Ascending aorta (tissue), 2 donors: ENCODE measurements at regions of chr1 and their contacts with region 1.

Region 1: GRCh38 chr1:61453111-61453961 is 271.6 kb downstream of the TM2D1 start:
- DNase-seq: peak; percentile 76 to 97
- H3K4me3 ChIP-seq: peak overlapping the region in 1 of 2 donors; percentile 31
- H3K27ac ChIP-seq: peak overlapping the region; percentile 83 to 92
- H3K4me1 ChIP-seq: peaks cover 20 to 54% of the 10 kb centered on the region in 2 donors
- H3K27me3 ChIP-seq: no peaks in the 10 kb centered on the region
- CTCF ChIP-seq: peak; percentile 67 to 80 (median 68)

Region 2: GRCh38 chr1:60978421-60979357 is 474.6 kb before region 1 on chr1:
- intact Hi-C with region 1: loop called (anchors 5 kb)
- DNase-seq: no peak
- H3K4me3 ChIP-seq: no peak overlapping the region
- H3K27ac ChIP-seq: peak overlapping the region; percentile 45 to 78
- H3K4me1 ChIP-seq: peaks cover 0 to 27% of the 10 kb centered on the region in 2 donors
- H3K27me3 ChIP-seq: no peaks in the 10 kb centered on the region
- CTCF ChIP-seq: peak; percentile 29 to 53 (median 46)

Region 3: GRCh38 chr1:61077676-61078541 is 375.4 kb before region 1 on chr1:
- intact Hi-C with region 1: loop called (anchors 2 kb)
- DNase-seq: peak; percentile 86 to 96
- H3K4me3 ChIP-seq: peak overlapping the region; percentile 75 to 95
- H3K27ac ChIP-seq: peak overlapping the region; percentile 82 to 95
- H3K4me1 ChIP-seq: peaks cover 8 to 35% of the 10 kb centered on the region in 2 donors
- H3K27me3 ChIP-seq: no peaks in the 10 kb centered on the region
- CTCF ChIP-seq: no peak

Region 4: GRCh38 chr1:61190618-61191432 is 262.5 kb before region 1 on chr1:
- intact Hi-C with region 1: loop called (anchors 5 kb)
- DNase-seq: no peak
- H3K4me3 ChIP-seq: peak overlapping the region in 1 of 2 donors; percentile 14
- H3K27ac ChIP-seq: peak overlapping the region; percentile 84 to 92
- H3K4me1 ChIP-seq: peaks cover 5 to 47% of the 10 kb centered on the region in 2 donors
- H3K27me3 ChIP-seq: no peaks in the 10 kb centered on the region
- CTCF ChIP-seq: no peak

Region 5: GRCh38 chr1:61337981-61338848 is 115.1 kb before region 1 on chr1:
- intact Hi-C with region 1: loop called (anchors 2 kb)
- DNase-seq: peak; percentile 38 to 92
- H3K4me3 ChIP-seq: peak overlapping the region; percentile 27 to 54
- H3K27ac ChIP-seq: peak overlapping the region; percentile 86 to 88
- H3K4me1 ChIP-seq: peaks cover 3 to 45% of the 10 kb centered on the region in 2 donors
- H3K27me3 ChIP-seq: no peaks in the 10 kb centered on the region
- CTCF ChIP-seq: peak; percentile 71 to 80 (median 75)

Region 6: GRCh38 chr1:61496476-61496893 is 43.1 kb after region 1 on chr1:
- intact Hi-C with region 1: no loop called
- DNase-seq: no peak
- H3K4me3 ChIP-seq: no peak overlapping the region
- H3K27ac ChIP-seq: peak overlapping the region in 1 of 2 donors; percentile 18
- H3K4me1 ChIP-seq: no peaks in the 10 kb centered on the region
- H3K27me3 ChIP-seq: no peaks in the 10 kb centered on the region
- CTCF ChIP-seq: no peak

Region 7: DNA sequence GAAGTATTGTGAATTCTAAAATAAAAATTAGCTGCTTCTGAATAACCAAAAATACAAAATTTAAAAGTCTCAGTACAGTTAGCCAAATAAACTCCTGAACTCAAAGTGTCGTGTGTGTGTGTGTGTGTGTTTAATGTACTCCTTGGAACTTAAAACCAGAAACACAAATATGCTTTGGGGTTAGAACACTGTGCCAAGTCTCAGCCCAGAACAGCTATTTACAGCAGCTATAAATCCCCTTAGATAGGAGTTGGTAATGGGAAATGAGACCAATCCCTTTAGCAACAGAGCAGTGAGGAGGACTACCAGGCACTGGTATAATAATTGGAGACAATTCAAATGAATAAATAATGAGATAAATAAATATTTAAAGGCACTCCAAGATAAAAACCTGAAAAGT is 372.1 kb after region 1 on chr1:
- intact Hi-C with region 1: no loop called
- DNase-seq: no peak
- H3K4me3 ChIP-seq: no peak overlapping the region
- H3K27ac ChIP-seq: peak overlapping the region in 1 of 2 donors; percentile 20
- H3K4me1 ChIP-seq: peaks cover 0 to 6% of the 10 kb centered on the region in 2 donors
- H3K27me3 ChIP-seq: no peaks in the 10 kb centered on the region
- CTCF ChIP-seq: no peak